ENCODE measurements at regions of chr6 and their contacts with region 1.

Region 1: GRCh38 chr6:113980937-113981554 is 10.1 kb upstream of the HDAC2 start:
- DNase-seq: peak; percentile 21
- CTCF ChIP-seq: peak; percentile 28

Region 2: GRCh38 chr6:113970805-113971676 is 10.0 kb before region 1 on chr6 and contains the start of gene HDAC2:
- CTCF ChIA-PET with region 1: interaction called, 18 read pairs
- POLR2A ChIA-PET with region 1: no interaction called
- DNase-seq: peak; percentile 93
- CTCF ChIP-seq: no peak

Region 3: GRCh38 chr6:114465511-114465910 is 484.5 kb after region 1 on chr6:
- CTCF ChIA-PET with region 1: no interaction called
- POLR2A ChIA-PET with region 1: no interaction called
- DNase-seq: no peak
- CTCF ChIP-seq: no peak